ENCODE measurements at regions of chr2 and their contacts with region 1.

Region 1: DNA sequence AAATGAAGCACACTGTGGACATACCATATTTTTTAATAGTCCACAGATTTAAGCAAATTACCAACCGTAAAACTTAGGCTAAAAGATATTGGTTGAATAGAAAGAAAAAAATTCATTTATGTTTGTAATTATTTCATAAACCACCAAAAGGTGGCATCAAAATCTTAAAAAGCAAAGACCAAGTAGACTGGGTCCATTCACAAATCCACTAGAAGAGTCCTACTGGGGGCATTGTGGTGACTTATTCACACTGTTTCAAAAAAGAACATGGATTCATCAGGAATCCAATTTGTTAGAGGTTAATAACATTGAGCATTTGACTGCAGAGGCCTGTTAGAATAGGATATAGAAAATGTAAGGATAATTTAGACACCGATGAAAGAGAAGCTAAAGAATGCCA is 194.9 kb upstream of the KYNU start:
- DNase-seq: no peak

Region 2: DNA sequence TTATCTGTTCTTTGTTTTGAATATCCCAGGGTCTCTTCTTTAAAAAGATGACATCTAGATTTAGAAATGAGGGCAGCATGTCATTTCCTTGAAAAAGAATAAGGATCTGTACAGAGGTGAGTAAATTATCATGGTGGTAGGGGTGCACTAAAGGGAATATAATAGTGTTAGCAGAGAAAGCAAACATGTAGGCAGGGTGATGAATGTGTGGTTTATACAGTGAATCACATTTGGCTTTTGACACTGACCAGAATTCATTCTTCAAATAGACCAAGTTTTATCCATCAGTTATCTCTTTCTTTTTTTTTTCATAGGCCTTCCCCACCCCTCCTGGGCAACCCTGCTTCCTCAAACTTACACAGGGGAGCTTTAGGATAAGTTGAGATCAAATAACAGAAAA is 367.2 kb before region 1 on chr2:
- intact Hi-C with region 1: no loop called
- DNase-seq: no peak

Region 3: DNA sequence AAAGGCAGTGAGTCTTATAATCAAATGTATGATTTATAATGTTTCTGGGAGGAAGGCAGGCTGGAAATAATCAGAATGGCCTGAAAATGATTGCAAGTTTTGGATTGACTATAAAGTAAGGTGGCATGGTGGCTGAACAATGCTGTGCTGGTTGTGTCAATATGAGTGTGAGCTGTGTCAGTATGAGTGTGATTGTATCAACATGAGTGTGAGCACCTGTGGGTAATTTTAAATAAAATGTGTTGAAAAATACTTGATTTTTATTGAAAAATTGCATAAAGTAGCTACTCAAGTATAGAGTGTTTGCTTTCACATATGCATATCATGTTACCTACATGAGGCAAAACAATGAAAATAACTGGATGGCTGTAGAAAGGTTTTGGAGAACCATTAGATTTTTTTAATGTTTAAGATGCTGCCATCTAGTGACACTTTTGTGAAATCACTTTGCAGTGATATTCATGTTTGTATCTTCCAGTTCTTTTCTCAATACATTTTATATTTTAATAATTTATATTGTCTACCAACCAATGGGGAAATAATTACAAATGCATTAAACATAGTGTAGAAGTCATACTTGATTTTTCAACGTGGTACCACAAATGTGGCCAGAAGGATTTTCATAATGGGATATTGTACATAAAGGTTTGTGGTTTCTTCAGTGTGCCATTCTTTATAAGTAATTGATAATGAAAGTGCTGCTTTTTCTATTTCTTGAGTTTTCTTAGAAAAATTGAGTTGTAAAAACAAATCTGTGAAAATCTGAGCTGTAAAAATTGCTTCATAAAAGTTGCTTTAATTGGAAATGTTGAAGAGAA is 298.2 kb after region 1 on chr2:
- intact Hi-C with region 1: loop called (anchors 5 kb)
- DNase-seq: no peak

Measured in cardiac septum (tissue), 1 donor.